OCI-LY7 (cell line): ENCODE measurements at regions of chr10 and their contacts with region 1.

Region 1: DNA sequence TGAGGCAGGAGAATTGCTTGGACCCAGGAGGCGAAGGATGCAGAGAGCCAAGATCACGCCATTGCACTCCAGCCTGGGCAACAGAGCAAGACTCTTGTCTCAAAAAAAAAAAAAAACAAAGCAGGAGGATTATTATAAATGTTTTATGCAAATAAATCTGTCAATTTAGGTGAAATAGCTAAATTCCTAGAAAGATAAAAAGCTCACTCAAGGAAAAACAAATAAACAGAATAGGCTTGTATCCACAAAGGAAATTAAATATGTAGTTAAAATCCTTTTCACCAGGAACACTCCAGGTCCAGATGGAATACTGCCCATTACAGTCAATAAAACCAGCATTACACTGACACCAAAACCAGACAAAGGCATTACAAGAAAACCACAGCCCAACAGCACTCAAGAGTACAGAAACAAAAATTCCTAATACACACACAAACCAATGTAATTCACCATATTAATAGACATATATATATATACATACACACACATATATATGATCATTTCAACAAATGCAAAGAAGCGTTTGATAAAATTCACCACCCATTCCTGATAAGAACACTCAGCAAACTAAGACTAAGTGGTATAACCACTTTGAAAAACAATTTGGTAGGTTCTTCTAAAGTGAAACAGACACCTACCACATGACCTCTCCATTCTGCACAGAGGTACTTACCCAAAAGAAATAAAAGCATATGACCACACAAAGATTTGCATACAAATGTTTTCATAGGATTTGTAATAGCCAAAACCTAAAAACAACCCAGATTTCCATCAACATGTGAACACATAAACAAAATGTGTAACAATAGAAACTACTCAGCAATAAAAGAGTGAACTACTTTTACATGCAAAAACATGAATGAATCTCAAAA is 38.8 kb downstream of the ABI1 start:
- DNase-seq: no peak
- H3K4me3 ChIP-seq: no peak overlapping the region
- H3K27ac ChIP-seq: no peak overlapping the region
- H3K4me1 ChIP-seq: peaks cover 20% of the 10 kb centered on the region
- CTCF ChIP-seq: no peak

Region 2: GRCh38 chr10:26805567-26806245 is 16.2 kb before region 1 on chr10:
- CTCF ChIA-PET with region 1: interaction called, 6 read pairs
- POLR2A ChIA-PET with region 1: interaction called, 11 read pairs
- intact Hi-C with region 1: no loop called
- DNase-seq: no peak
- H3K4me3 ChIP-seq: peak overlapping the region; percentile 40
- H3K27ac ChIP-seq: peak overlapping the region; percentile 100
- H3K4me1 ChIP-seq: peaks cover 72% of the 10 kb centered on the region
- CTCF ChIP-seq: no peak

Region 3: GRCh38 chr10:26832960-26833359 is 11.0 kb after region 1 on chr10:
- CTCF ChIA-PET with region 1: no interaction called
- POLR2A ChIA-PET with region 1: interaction called, 12 read pairs
- intact Hi-C with region 1: no loop called
- DNase-seq: no peak
- H3K4me3 ChIP-seq: no peak overlapping the region
- H3K27ac ChIP-seq: no peak overlapping the region
- H3K4me1 ChIP-seq: peaks cover 8% of the 10 kb centered on the region
- CTCF ChIP-seq: no peak